Right cardiac atrium (tissue), 5 donors: ENCODE measurements at regions of chr3 and their contacts with region 1.

Region 1: GRCh38 chr3:157532529-157533297 is 29.5 kb upstream of the VEPH1 start:
- DNase-seq: no peak
- ATAC-seq: peak; percentile 85 to 89
- H3K4me3 ChIP-seq: no peak overlapping the region
- H3K27ac ChIP-seq: no peak overlapping the region
- H3K4me1 ChIP-seq: peaks cover 2% of the 10 kb centered on the region
- H3K27me3 ChIP-seq: no peaks in the 10 kb centered on the region

Region 2: DNA sequence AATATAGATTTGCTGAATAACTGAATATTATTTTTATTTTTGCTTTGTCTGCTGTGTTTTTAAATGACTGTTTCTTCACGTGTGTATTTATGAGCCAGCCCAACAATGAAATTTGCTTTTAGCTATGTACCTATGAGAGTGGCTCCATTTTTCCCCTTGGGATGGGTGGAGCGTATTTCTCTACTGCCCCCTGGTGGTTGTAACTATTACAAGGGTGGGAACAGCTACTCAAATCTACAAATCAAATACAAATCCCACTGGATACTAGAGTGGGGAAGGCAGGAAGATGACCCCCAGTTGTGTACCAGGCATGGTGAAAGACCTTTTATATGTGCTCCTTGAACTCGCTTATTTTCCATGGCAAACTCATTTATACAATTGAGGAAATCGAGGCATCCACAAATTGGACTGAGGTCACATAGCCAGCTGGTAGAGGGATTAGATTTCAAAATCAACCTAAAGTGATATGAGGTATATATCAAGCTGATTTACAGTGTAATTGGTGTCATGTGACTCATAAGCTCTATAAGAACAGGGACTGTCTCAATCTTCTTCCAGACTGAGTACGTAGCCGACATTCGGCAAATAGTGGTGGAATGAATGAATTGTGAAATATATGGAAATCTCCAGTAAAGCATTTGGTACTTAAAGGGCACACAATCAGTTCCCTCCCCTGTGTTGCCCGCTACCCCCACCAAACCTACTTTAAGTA is 40.0 kb after region 1 on chr3:
- intact Hi-C with region 1: loop called in 1 of 4 experiments (anchors 5 kb)
- DNase-seq: no peak
- ATAC-seq: peak in 1 of 2 donors; percentile 66
- H3K4me3 ChIP-seq: no peak overlapping the region
- H3K27ac ChIP-seq: no peak overlapping the region
- H3K4me1 ChIP-seq: no peaks in the 10 kb centered on the region
- H3K27me3 ChIP-seq: no peaks in the 10 kb centered on the region